ENCODE measurements at regions of chr17 and their contacts with region 1.

Region 1: DNA sequence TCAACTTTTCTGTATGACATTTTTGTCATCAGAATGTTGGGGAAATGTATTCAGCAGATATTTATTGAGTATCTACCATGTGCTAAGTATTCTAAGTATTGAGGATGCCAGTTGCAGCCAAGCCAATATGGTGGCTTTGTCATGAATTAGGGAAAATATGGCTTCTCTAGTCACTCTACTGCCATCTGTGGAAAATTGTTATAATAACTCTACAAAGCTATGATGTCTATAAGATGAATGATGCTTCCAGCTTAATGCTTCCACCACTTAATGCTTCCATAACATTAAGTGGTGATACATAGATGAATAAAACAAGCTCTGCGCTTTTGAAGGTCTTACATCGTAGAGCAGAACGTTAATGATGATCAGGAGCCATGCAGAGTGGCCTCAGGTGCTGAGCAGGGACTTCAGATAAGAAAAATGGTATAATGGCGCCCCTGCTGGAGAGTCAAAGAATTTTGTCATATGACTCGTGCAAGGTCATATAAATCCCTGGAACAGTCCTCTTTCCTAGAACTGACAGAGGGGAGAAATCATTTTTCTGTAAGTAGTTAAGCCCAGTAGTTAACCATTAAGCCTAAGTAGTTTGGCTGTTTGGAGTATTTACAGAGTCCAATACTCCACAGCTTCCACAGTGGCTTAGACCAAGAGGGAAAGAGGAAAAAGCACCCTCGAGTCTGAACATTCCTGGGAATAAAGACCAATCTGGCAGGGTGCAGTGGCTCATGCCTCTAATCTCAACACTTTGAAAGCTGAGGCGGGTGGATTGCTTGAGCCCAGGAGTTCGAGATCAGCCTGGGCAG is 2.7 kb upstream of the TMIGD1 start:
- DNase-seq: peak; percentile 73
- H3K4me3 ChIP-seq: no peak overlapping the region
- H3K27ac ChIP-seq: no peak overlapping the region
- H3K4me1 ChIP-seq: peaks cover 16% of the 10 kb centered on the region
- H3K27me3 ChIP-seq: no peaks in the 10 kb centered on the region
- CTCF ChIP-seq: peak; percentile 85

Region 2: GRCh38 chr17:30104575-30105339 is 231.8 kb before region 1 on chr17:
- CTCF ChIA-PET with region 1: interaction called, 15 read pairs
- POLR2A ChIA-PET with region 1: no interaction called
- intact Hi-C with region 1: loop called (anchors 1 kb)
- DNase-seq: peak; percentile 88
- H3K4me3 ChIP-seq: peak overlapping the region; percentile 44
- H3K27ac ChIP-seq: no peak overlapping the region
- H3K4me1 ChIP-seq: no peaks in the 10 kb centered on the region
- H3K27me3 ChIP-seq: no peaks in the 10 kb centered on the region
- CTCF ChIP-seq: peak; percentile 98

Region 3: DNA sequence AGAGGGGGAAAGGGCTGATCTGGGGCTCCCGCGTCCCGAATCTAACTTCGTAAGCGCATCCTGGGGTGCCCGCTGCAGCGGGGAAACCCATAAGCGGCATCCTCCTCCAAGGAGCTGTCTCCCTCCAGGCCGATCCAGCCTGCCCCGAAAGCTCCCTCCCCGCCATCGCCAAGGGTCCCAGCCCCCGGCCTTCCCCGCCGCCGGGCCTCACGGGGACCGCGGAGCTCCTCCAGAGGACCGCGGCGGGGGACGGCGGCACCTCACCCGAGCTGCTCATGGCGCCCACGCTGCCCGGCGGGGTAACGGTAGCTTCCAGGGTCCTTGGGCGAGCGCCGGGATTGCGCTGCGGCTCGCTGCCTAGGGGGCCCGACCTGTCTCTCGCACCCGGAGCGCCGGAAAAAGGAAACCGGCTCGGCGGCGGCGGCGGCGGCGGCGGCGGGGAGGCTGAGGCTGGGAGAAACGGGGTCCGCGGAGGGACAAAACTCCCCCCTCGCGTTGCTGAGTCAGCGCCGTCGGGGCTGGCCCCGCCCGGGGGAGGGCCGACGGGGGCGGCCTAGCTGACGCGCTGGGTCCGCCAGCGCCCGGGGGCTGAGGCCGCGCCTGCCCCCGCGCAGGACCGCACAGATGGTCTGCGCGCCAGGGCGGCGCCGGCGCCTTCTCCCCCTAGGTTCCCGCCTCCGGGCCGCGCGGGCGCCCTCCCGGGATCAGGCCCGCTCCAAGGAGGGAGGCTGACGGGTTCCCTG is 44.9 kb before region 1 on chr17 and contains the start of gene BLMH:
- CTCF ChIA-PET with region 1: interaction called, 11 read pairs
- POLR2A ChIA-PET with region 1: no interaction called
- intact Hi-C with region 1: no loop called
- DNase-seq: peak; percentile 88
- H3K4me3 ChIP-seq: peak within 1 kb of the TSS; percentile 85
- H3K27ac ChIP-seq: peak within 1 kb of the TSS; percentile 81
- H3K4me1 ChIP-seq: peaks cover 3% of the 10 kb centered on the region
- H3K27me3 ChIP-seq: no peaks in the 10 kb centered on the region
- CTCF ChIP-seq: no peak
- total RNA-seq, gene BLMH: 94.3 and 100 TPM in 2 replicates